ENCODE measurements at regions of chr5 and their contacts with region 1.

Region 1: DNA sequence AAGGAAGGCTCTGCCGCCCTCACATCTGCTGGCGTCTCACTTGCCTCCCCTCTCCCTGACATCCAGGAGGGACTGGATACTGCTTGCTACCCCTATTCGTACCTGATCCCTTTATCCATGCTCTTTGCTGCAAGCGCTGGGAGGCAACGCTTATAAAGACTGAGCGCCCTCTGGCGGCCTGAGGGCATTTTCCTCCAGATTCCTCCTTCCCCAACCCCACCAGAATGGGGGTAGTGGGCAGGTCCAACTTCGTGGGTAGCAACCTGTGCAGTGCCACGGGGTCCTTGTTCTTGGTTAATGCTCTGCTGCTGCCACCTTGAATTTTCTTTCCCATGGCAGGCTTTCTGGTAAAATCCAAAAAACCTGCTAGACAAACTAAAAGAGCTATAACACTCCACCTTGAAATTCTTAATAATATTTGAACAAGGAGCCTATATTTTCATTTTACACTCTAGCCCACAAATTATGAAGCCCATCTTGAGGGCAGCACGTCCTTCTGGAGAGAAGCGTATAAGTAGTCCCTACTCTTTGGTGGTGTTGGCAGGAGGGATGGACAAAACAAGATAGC is 52.4 kb downstream of the JADE2 start:
- DNase-seq: peak; percentile 57 to 93 (median 82)
- ATAC-seq: peak; percentile 77 to 87 (median 84)
- H3K4me3 ChIP-seq: no peak overlapping the region
- H3K27ac ChIP-seq: peak overlapping the region in 1 of 4 donors; percentile 8
- H3K4me1 ChIP-seq: peaks cover 0 to 11% (median 0%) of the 10 kb centered on the region in 3 donors
- H3K27me3 ChIP-seq: no peaks in the 10 kb centered on the region
- CTCF ChIP-seq: peak; percentile 69 to 80 (median 72)

Region 2: DNA sequence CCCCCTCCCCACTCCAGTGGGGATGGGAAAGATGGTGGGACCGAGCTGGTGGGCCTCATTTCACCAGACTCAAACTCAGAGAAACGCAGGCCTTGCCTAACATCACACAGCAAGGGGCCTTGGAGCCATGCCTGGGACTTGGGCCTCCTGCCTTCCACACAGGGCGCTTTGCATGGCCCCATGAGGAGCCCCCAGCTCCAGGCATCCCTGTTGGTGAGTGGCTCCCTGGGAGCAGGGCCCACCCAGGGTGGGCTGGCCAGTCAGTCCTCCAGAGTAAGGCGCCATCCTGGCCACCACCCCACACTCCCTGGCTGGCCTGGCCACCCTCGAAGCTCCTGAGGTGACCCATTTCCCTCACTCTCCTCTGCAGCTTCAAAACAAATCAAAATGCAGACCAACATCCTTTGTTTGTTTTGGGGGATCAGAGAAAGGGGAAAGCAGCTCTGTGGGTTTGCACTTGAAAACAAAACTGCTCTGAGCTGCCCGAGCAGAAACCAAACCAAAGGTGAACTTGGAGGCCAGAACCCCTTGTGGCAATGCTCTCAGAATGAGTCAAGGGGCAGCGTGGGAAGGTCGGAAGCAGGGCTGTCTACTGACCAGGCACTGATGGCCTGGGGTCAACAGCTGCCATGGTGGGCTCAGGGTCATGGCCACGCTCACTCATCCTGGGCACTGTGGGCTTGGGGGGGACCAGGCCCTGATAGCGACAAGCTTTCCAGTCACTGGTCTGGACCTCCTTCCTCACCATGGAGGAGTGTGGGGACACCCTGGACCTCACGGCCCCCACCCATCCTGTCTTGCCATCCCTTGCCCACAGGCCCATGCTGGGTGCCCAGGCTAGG is 536.1 kb before region 1 on chr5:
- intact Hi-C with region 1: loop called in 1 of 3 experiments (anchors 10 kb)
- DNase-seq: no peak
- ATAC-seq: no peak
- H3K4me3 ChIP-seq: no peak overlapping the region
- H3K27ac ChIP-seq: no peak overlapping the region
- H3K4me1 ChIP-seq: no peaks in the 10 kb centered on the region
- H3K27me3 ChIP-seq: no peaks in the 10 kb centered on the region
- CTCF ChIP-seq: no peak

Region 3: GRCh38 chr5:134304311-134304710 is 273.6 kb before region 1 on chr5:
- intact Hi-C with region 1: loop called (anchors 5 to 10 kb)
- DNase-seq: no peak
- ATAC-seq: no peak
- H3K4me3 ChIP-seq: no peak overlapping the region
- H3K27ac ChIP-seq: no peak overlapping the region
- H3K4me1 ChIP-seq: peaks cover 0 to 3% (median 0%) of the 10 kb centered on the region in 3 donors
- H3K27me3 ChIP-seq: no peaks in the 10 kb centered on the region
- CTCF ChIP-seq: no peak

Region 4: DNA sequence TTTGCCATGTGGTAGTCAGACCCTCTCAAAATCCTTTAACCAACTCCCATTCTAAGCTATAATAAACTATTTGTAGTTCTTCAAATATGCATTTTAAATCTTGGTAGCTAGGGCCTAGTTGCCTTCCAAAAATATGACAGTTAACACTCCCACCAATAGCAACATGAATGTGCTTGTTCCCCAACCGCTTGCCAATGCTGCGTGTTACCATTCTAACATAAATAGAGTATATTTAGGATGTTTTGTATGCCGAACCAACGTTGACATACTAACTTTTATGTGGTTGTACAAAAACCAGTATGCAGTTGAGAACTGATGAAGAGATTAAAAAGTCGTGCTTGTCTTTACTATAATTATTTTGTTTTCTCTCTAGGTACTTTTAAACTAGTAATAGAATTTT is 197.5 kb before region 1 on chr5:
- intact Hi-C with region 1: loop called in 1 of 3 experiments (anchors 10 kb)
- DNase-seq: no peak
- ATAC-seq: no peak
- H3K4me3 ChIP-seq: no peak overlapping the region
- H3K27ac ChIP-seq: no peak overlapping the region
- H3K4me1 ChIP-seq: no peaks in the 10 kb centered on the region
- H3K27me3 ChIP-seq: no peaks in the 10 kb centered on the region
- CTCF ChIP-seq: no peak

Measured in pancreas (tissue), 10 donors.